OCI-LY7 (cell line): ENCODE measurements at regions of chr10 and their contacts with region 1.

Region 1: GRCh38 chr10:110871298-110872084 is at the start of gene PDCD4:
- DNase-seq: peak; percentile 93
- H3K4me3 ChIP-seq: peak within 1 kb of the TSS; percentile 74
- H3K27ac ChIP-seq: peak within 1 kb of the TSS; percentile 92
- H3K4me1 ChIP-seq: peaks cover 69% of the 10 kb centered on the region
- CTCF ChIP-seq: no peak
- total RNA-seq, gene PDCD4: 59.0 and 70.6 TPM in 2 replicates

Region 2: DNA sequence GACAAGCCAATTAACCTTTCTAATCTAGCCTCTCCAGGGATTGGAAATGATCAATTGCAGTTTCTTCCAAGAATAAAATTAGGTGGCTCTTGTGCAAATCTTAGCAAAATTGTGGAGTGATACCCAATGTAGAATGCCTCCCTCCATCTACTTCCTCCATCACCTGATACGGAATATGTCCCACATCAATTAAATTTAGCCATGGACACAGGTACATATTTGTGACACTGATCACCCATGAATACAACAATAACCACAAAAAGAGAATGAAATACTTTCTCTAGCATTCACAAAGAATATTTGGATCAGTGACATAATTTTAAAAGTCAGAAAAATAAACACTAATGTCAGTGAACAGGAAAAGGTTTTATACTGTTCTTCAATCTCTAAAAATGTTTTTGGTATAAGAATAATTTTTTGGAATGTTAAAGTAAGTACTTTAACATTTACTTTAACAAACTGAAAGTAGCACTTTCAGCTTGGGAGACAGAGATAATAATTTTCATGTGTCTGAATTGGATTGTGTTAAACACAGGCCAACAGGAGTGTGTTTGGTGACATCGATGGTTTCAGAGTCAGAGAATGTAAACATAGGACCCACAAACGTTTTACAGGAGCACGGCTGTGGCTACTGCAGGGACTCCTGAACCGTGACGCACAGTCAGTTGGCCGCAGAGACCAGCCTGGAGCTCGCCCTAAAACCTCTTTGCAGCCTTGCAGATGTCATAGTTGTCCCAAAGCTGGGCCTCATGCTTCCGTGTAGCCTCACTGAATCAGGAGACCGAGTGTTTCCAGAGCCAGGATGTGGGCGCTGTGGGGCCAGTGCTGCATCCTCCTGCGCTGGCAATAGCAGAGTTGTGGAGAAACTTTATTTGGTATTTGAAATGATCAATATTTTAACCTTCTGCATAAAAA is 220.2 kb before region 1 on chr10:
- CTCF ChIA-PET with region 1: no interaction called
- POLR2A ChIA-PET with region 1: no interaction called
- intact Hi-C with region 1: loop called (anchors 5 kb)
- DNase-seq: peak; percentile 71
- H3K4me3 ChIP-seq: peak overlapping the region; percentile 43
- H3K27ac ChIP-seq: peak overlapping the region; percentile 85
- H3K4me1 ChIP-seq: peaks cover 80% of the 10 kb centered on the region
- CTCF ChIP-seq: no peak; the same call in 1 of the 2 replicates

Region 3: GRCh38 chr10:110843031-110843430 is 28.5 kb before region 1 on chr10:
- CTCF ChIA-PET with region 1: interaction called, 3 read pairs
- POLR2A ChIA-PET with region 1: interaction called, 75 read pairs
- intact Hi-C with region 1: loop called (anchors 1 kb)
- DNase-seq: peak; percentile 98
- H3K4me3 ChIP-seq: peak overlapping the region; percentile 63
- H3K27ac ChIP-seq: peak overlapping the region; percentile 97
- H3K4me1 ChIP-seq: peaks cover 96% of the 10 kb centered on the region
- CTCF ChIP-seq: no peak

Region 4: DNA sequence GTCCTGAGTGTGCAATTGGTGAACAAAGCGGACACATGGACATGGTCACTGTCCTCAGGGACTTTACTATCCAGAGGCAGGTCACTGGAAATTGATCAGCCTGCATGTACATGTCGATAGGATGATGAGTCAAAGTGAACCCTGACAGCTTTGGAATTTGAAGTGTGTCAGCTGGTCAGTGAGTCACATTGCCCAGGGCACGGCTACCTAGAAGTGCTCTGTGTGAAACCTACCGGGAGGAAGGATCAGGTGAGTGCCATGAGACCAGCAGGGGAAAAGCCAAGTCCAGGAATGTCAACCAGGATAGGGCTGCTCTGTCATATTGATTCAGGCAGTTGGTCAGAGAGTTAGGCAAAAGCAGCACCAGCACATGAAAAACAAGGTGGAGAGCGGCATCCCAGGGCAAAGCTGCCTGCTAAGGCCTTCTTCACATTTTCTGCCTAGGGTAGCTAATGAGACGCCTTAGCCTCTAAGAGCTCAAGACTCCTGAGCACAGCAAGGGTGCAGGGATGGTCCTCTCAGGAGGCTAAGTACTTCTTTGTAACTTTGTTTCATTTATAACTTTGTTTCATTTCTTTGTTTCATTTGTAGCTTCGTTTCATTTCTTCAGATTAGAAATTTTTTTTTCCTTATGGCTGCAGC is 19.1 kb before region 1 on chr10:
- CTCF ChIA-PET with region 1: interaction called, 4 read pairs
- POLR2A ChIA-PET with region 1: interaction called, 29 read pairs
- intact Hi-C with region 1: no loop called
- DNase-seq: no peak
- H3K4me3 ChIP-seq: no peak overlapping the region
- H3K27ac ChIP-seq: no peak overlapping the region
- H3K4me1 ChIP-seq: peaks cover 50% of the 10 kb centered on the region
- CTCF ChIP-seq: no peak

Region 5: DNA sequence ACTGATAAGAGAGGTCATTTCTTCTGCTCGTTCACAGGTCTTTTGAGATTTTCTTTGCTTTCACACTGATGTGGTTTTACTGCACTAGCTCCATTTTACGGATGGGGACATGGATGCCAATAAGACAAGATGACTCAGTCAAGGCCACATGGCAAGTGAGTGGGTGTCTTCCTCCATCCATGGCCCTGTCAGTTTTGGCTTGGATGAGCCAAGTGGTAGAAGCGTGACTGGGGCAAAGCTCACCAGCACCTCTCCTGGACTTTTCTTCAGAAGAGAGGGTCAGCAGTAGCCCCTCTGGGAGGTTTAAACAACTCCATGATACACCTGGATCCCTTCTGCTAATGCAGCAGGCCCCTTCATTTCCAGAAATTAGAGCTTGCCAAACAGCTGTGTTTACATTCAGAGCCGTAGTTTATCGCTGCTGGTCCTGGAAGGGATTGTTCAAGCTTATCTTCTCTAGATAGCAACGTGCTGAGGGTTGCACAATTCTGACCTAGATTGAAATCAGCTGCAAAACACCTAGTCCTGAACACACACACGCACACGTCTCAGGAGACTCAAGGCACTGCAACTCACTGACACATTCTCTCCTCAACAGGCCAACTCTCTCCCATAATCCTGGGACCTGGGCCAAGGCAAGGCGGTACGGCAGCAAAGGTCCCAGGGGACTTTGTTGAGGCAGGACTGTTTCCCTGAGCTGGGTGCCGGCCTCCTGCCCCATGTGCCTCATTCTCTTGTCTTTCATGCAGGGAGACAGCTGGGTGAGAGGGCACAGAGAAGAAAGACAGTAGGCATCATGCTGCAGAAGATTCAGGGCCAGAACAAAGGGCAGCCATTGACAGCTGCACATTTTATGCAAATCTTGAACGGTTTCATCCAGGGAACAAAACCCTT is 14.0 kb before region 1 on chr10:
- CTCF ChIA-PET with region 1: interaction called, 10 read pairs
- POLR2A ChIA-PET with region 1: interaction called, 29 read pairs
- intact Hi-C with region 1: no loop called
- DNase-seq: peak; percentile 84
- H3K4me3 ChIP-seq: peak overlapping the region; percentile 11
- H3K27ac ChIP-seq: peak overlapping the region; percentile 91
- H3K4me1 ChIP-seq: peaks cover 75% of the 10 kb centered on the region
- CTCF ChIP-seq: no peak